Mammary epithelial cell (primary cell): ENCODE measurements at regions of chr7 and their contacts with region 1.

Region 1: GRCh38 chr7:43674584-43675436 is 54.5 kb downstream of the COA1 start:
- DNase-seq: peak; percentile 82
- H3K4me3 ChIP-seq: no peak overlapping the region
- H3K27ac ChIP-seq: peak overlapping the region; percentile 66
- H3K4me1 ChIP-seq: peaks cover 8% of the 10 kb centered on the region
- H3K27me3 ChIP-seq: no peaks in the 10 kb centered on the region
- CTCF ChIP-seq: no peak

Region 2: GRCh38 chr7:43647673-43648472 is 26.9 kb before region 1 on chr7:
- CTCF ChIA-PET with region 1: no interaction called
- dilution Hi-C with region 1: no loop called
- in situ Hi-C with region 1: no loop called
- intact Hi-C with region 1: loop called (anchors 1 kb)
- DNase-seq: peak; percentile 97
- H3K4me3 ChIP-seq: peak overlapping the region in 1 of 3 experiments; percentile 26
- H3K27ac ChIP-seq: peak overlapping the region; percentile 91
- H3K4me1 ChIP-seq: peaks cover 59% of the 10 kb centered on the region
- H3K27me3 ChIP-seq: no peaks in the 10 kb centered on the region
- CTCF ChIP-seq: no peak

Region 3: GRCh38 chr7:43693687-43694398 is 19.0 kb after region 1 on chr7:
- CTCF ChIA-PET with region 1: no interaction called
- dilution Hi-C with region 1: no loop called
- in situ Hi-C with region 1: no loop called
- intact Hi-C with region 1: loop called (anchors 1 kb)
- DNase-seq: peak; percentile 42
- H3K4me3 ChIP-seq: no peak overlapping the region
- H3K27ac ChIP-seq: no peak overlapping the region
- H3K4me1 ChIP-seq: peaks cover 30% of the 10 kb centered on the region
- H3K27me3 ChIP-seq: no peaks in the 10 kb centered on the region
- CTCF ChIP-seq: no peak